ENCODE measurements at regions of chr3 and their contacts with region 1.

Region 1: DNA sequence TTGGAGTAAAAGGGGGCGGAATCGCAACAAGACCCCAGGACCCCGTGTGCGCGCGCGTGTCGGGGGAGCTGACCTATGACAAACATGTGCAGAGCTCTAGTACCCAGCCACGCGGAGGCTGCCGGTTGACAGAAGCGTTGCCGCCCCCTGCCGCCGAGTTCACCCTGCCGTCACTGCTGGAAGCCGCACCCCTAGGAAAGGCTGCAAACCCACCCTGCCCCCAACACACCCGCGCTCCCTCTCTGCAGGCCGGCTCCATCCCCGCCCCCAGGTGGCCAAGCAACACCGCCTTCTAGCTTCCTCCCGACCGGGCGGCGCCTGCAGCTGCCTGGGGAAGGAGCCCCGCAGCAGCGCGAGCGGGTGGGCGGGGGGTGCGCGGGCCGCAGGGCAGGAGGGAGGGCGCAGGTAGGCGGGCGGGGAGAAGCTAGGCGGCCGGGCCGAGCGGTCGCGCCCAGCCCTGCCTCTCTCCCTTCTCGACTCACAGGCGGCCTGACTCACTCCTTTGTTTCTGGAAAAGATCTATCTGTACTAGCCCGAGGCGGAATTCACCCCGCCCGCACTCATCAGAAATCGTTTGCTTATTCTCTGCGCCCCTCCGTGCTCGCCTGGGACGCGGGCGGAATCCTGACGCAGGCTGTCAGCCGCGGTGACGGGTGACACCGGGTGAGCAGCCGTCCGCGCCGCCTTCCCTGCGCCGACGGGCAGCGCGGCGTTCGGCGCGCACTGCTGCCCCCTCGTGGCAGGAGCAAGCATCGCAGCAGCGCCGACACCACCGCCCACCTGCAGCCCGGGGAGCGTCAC is 160.8 kb downstream of the GAP43 start:
- DNase-seq: peak; percentile 72 to 92 (median 84)
- H3K4me3 ChIP-seq: peak overlapping the region; percentile 55 to 89 (median 77)
- H3K27ac ChIP-seq: peak overlapping the region in 58 of 59 donors; percentile 48 to 93 (median 86)
- H3K27me3 ChIP-seq: no peaks in the 10 kb centered on the region
- CTCF ChIP-seq: peak; percentile 84 to 99 (median 95)

Region 2: DNA sequence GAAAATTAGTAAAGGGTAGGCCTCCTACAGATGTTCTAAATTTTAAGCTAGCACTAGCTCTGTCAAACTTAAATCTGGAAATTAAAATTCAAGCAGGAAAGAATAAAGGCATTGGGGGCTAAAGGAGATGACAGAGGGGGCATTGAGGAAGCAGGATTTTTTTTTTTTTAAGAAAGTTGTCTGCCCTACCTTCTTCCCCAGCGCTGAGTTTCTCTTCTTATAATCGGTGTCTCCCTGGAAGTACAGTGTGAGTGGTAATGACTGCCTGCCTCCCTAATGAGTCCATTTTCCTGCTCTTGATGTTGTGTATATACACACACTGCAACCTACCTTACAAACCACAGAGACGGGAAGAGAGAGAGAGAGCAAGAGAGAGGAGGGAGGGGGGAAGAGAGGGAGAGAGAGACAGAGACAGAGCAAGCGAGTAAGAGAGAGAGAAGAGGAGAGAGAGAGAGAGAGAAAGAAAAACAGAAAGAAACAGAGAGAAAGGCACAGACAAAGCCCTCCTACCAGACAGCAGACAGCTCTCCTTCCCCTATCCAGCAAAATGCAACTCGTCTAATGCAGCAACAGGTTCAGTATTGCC is 684.1 kb before region 1 on chr3:
- intact Hi-C with region 1: loop called in 1 of 2 experiments (anchors 10 kb)
- DNase-seq: peak in 2 of 10 donors; percentile 14 to 39
- H3K4me3 ChIP-seq: peak overlapping the region; percentile 8 to 67 (median 49)
- H3K27ac ChIP-seq: peak overlapping the region; percentile 4 to 89 (median 80)
- H3K27me3 ChIP-seq: no peaks in the 10 kb centered on the region
- CTCF ChIP-seq: peak in 2 of 56 donors; percentile 7 to 12

Region 3: DNA sequence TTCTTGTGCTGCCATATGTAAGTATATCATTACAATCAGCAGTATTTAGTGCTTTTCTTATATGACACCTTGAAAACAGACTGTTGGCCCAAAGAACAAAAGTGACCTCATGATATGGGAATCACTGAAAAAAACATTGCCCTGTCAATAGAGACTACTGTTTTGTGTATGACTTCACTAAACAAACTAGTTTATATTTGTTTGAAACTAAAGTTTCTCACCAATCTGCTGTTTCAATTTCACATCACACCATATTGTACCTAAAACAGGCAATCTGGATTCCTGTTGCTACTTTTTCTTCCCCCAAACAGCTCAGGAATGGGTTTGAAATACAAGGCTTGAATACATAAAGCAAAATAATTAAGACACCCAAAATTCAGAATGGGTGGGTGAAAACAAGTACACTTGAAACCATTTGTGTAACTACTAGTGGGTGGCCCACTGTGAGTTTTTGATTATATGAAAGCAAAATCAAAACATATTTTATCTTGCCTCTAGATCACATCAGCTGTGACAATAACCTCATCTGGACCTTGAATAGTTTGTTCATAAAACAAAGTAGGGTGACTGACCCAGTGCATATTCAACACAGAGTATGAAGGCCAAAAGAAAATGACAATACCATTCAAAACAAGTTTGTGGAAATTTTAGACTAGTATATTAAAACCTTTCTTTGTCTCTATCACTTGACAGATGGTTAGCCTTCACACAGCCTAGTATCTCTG is 642.9 kb before region 1 on chr3:
- intact Hi-C with region 1: loop called in 1 of 2 experiments (anchors 5 kb)
- DNase-seq: no peak
- H3K4me3 ChIP-seq: no peak overlapping the region
- H3K27ac ChIP-seq: peak overlapping the region in 6 of 59 donors; percentile 3 to 37 (median 16)
- H3K27me3 ChIP-seq: no peaks in the 10 kb centered on the region
- CTCF ChIP-seq: no peak

Region 4: DNA sequence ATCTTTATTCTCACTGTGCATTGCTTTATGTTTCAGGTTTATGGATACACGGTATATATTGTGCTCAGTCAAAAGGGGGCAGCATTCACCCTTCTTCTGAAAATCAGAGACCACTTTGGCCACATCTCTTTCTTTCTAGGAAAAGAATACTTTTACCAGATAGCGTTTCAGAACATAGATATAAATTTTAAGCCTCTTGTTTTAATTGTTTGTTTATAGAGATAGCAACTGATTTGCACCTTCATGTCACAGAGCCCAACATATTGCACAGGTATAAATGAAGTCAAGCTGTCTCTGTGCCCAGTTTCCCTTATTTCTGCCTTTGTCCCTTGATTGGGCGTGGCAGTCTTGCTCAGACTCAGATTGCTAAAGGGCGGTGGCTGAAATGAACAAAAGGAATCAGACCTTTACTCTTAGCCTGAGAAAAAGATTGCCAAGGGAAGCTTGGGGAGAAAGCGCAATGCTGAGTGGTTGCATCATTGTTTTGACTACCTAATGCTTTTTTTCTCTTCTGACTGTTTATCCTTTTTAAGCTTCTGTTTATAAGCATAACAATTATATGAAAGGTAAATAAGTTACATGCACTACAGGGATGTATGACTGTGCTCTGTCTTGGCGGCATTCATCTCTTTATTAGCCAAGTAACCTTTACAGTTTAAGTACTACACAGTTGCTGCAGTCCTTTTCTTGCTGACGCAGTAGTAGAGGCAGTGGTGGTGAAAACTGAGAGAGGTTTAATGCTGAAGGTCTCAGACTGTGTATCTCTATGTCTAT is 566.3 kb before region 1 on chr3:
- intact Hi-C with region 1: loop called (anchors 5 kb)
- DNase-seq: peak in 1 of 10 donors; percentile 42
- H3K4me3 ChIP-seq: peak overlapping the region in 3 of 59 donors; percentile 2 to 24 (median 8)
- H3K27ac ChIP-seq: no peak overlapping the region
- H3K27me3 ChIP-seq: peaks cover 0 to 4% (median 0%) of the 10 kb centered on the region in 45 donors
- CTCF ChIP-seq: peak; percentile 57 to 84 (median 72)

Region 5: GRCh38 chr3:115562636-115563267 is 221.4 kb before region 1 on chr3:
- intact Hi-C with region 1: no loop called
- DNase-seq: no peak
- H3K4me3 ChIP-seq: no peak overlapping the region
- H3K27ac ChIP-seq: no peak overlapping the region
- H3K27me3 ChIP-seq: peaks cover 0 to 3% (median 0%) of the 10 kb centered on the region in 45 donors
- CTCF ChIP-seq: no peak

Region 6: DNA sequence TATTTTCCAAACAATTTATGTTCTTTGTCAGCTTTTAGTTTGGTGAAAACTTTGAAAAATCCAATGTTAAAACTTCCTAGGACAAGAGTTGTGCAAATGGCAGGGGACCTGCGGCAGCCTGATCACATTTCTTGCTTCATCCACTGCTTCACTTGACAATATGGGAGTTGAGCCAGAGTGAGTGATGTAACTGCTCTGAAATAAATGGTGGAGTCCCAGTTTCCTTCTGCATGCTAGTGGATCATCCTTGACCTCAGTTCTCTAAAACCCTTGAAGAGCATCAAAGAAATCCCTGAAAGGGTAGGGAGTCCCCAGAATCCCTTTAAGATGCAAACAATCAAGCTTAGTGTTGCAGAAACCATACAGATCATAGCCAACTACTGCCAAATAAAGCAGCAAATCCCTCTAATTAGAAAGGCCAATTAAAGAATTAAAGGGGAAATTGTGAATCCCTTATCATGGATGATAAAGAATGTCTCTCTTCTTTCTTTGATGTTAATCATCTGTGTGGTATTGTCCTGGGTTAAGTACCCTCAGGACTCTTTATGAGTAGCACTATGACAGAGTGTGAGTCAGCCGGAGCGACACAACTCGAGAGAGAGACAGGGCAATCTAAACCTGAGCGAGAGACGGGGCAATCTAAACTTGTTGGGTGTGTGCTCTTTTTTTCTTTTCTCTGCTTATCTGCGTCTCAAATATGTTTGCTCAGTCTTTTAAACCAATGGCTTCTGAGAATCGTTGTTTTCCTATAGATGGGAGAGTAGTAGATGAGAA is 202.6 kb before region 1 on chr3:
- intact Hi-C with region 1: no loop called
- DNase-seq: no peak
- H3K4me3 ChIP-seq: no peak overlapping the region
- H3K27ac ChIP-seq: no peak overlapping the region
- H3K27me3 ChIP-seq: peaks cover 0 to 6% (median 0%) of the 10 kb centered on the region in 45 donors
- CTCF ChIP-seq: no peak

Region 7: DNA sequence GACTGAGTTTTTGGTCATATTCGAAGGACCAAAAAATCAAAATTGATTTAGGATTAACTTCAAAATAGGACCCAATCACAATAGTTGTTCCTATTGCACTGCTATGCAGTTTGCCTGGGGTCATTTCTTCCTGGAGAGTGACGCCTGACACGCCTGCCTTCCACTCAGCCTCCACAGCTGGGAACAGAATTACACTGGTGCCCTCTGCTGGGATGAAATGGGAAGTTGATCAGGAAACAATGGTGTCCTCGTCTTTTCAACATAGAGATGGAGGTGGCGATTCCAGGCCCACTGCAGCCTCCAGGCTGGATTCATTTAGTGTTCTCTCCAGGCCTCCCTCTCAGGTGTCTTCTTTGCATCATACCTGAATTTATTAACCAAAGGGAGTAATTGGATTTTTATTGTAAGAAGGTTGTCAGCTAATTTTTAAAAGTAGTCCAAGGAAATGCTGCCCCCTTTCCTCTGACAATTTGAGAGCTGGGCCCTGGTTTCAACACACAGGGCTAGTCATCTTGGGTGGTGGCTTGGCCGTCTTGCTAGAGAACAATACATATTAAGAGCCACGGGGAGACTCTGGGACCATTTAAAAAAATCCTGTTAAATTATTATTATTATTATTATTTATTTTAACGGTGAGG is 91.1 kb before region 1 on chr3:
- intact Hi-C with region 1: loop called (anchors 5 to 10 kb)
- DNase-seq: peak; percentile 35 to 85 (median 70)
- H3K4me3 ChIP-seq: peak overlapping the region in 10 of 59 donors; percentile 14 to 54 (median 42)
- H3K27ac ChIP-seq: peak overlapping the region in 36 of 59 donors; percentile 1 to 69 (median 40)
- H3K27me3 ChIP-seq: no peaks in the 10 kb centered on the region
- CTCF ChIP-seq: peak; percentile 41 to 96 (median 88)

Measured in dorsolateral prefrontal cortex (tissue), 120 donors.